ENCODE measurements at regions of chr5 and their contacts with region 1.

Region 1: GRCh38 chr5:172707285-172708182 is 63.5 kb downstream of the DUSP1 start:
- DNase-seq: peak; percentile 66 to 84
- ATAC-seq: peak; percentile 98 to 99
- H3K4me3 ChIP-seq: peak overlapping the region; percentile 33
- H3K27ac ChIP-seq: peak overlapping the region; percentile 80 to 83
- H3K4me1 ChIP-seq: peaks cover 11% of the 10 kb centered on the region
- CTCF ChIP-seq: peak; percentile 87
- EP300 ChIP-seq: no peak
- POLR2A ChIP-seq: no peak
- RAD21 ChIP-seq: peak; percentile 96 to 97

Region 2: DNA sequence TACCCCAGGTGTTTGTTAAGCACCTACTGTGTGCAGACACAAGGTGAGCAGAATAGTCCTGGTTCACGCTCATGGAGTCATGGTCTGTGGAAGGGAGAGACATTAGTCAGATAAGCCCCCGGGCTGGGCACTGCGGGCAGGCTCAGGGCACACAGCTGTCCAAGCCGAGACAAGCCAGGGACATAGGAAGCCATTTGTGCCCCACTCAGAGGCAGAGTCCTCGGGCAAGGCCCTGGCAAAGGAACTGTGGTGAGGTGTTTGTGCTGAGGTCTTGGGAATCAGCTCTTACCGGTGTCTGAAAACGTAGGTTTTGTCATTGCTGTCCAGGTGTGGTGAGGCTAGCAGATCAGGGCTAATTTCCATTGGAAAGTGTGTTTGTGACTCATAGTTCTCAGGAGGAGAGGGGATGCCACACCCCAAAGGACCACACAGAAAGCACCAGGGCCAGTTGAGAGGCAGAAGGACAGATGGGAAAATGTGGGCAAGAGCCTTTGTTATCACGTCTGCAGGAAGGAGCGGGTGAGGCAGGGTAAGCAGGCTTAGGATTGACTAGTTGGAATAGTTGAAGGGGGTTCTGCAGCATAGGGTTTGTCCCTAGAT is 112.6 kb before region 1 on chr5:
- CTCF ChIA-PET with region 1: no interaction called
- POLR2A ChIA-PET with region 1: no interaction called
- DNase-seq: no peak
- ATAC-seq: peak in 1 of 2 experiments; percentile 46; a peak in 2 of 6 replicates
- H3K4me3 ChIP-seq: no peak overlapping the region
- H3K27ac ChIP-seq: no peak overlapping the region
- H3K4me1 ChIP-seq: no peaks in the 10 kb centered on the region
- CTCF ChIP-seq: no peak
- EP300 ChIP-seq: no peak
- POLR2A ChIP-seq: no peak
- RAD21 ChIP-seq: no peak

Region 3: GRCh38 chr5:172697123-172698121 is 10.1 kb before region 1 on chr5:
- CTCF ChIA-PET with region 1: interaction called, 61 read pairs
- POLR2A ChIA-PET with region 1: interaction called, 3 read pairs
- DNase-seq: peak; percentile 80 to 84
- ATAC-seq: peak; percentile 83 to 90
- H3K4me3 ChIP-seq: peak overlapping the region; percentile 43
- H3K27ac ChIP-seq: peak overlapping the region; percentile 67 to 81
- H3K4me1 ChIP-seq: peaks cover 8% of the 10 kb centered on the region; the same call in 2 of the 3 replicates
- CTCF ChIP-seq: peak; percentile 92
- EP300 ChIP-seq: no peak
- POLR2A ChIP-seq: no peak
- RAD21 ChIP-seq: peak; percentile 98 to 99

Region 4: DNA sequence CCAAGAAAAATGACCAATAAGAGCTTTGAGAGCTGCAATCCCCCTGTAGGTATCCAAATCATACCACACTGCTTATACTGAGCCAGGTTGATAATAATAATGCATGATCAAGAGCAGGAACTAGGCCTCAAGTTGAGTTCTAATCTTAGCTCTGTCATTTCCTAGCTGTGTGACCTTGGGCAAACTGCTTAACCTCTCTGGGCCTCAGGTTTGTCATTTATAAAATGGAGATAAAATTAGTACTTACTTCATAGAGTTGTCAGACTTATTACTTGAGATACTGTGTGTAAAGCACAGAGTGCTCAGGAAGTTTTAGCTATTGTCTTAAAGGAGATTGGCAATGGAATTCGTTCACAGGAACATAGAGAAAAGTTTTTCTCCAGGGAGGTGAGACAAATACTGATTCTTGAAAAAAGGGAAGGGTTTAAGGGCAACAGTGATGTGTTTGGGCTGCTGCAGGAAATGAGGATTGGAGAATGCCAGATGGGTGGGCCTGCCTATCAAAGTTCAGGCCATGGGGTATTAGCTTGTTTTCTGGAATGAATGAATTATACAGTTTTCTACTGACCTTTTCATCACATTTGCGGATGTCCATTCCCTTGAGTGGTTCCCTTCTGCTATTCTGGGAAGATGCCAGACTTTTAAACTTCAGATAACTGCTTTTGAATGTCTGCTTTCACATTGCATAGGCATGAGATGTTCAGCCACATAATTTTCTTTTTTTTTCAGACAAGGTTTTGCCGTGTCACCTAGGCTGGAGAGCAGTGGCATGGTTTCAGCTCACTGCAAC is 265.8 kb after region 1 on chr5:
- CTCF ChIA-PET with region 1: interaction called, 10 read pairs
- POLR2A ChIA-PET with region 1: no interaction called
- DNase-seq: no peak
- ATAC-seq: no peak
- H3K4me3 ChIP-seq: no peak overlapping the region
- H3K27ac ChIP-seq: no peak overlapping the region
- H3K4me1 ChIP-seq: no peaks in the 10 kb centered on the region
- CTCF ChIP-seq: no peak
- EP300 ChIP-seq: no peak
- POLR2A ChIP-seq: no peak
- RAD21 ChIP-seq: no peak

Region 5: GRCh38 chr5:173178369-173178910 is 470.9 kb after region 1 on chr5:
- CTCF ChIA-PET with region 1: no interaction called
- POLR2A ChIA-PET with region 1: interaction called, 12 read pairs
- DNase-seq: no peak
- ATAC-seq: no peak
- H3K4me3 ChIP-seq: no peak overlapping the region
- H3K27ac ChIP-seq: no peak overlapping the region
- H3K4me1 ChIP-seq: no peaks in the 10 kb centered on the region
- CTCF ChIP-seq: no peak
- EP300 ChIP-seq: no peak
- POLR2A ChIP-seq: no peak
- RAD21 ChIP-seq: no peak

Region 6: DNA sequence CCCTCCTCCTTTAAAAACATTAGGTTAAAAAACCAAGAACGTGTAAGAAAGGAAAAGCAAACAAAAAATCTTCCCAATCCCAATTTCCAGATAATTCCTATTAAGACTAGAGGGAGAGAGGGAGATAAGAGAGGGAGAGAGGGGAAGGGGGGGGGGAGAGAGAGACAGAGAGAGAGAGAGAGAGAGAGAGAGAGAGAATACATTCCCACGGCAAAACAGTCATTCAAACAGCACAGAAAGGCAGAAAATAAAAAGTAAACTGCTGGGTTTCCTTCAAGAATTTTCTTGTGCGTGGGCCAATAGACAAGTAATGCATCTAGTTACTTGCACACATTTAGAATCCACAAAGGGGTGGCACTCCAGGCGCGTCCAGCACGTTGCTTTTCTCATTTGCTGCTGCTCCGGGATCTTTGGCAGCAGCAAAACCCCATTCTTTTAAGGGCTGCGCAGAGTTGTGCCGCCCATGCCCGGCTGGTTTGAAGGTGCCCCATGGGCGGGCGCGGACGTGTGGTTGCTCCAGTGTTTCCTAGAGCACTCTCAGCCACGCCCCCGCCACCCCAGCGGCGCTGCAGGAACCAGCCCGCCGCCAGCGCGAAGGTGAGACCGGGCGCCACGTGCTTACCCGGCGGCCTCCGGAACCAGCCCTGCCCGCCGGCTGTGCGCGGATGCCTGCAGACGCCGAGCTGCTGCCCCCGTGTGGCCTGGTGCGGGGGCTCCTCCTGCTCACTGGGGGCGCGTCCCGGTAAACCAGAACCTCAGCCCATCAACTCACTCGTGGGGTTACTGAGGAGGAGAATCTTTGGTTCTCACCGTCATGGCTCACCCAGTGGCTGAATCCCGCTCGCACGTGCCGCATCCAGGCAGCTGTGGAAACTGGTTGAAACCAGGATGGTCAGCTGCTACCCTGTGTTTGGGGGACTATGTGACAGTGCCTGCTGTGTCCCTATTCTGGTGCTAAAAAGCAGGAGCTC is 576.1 kb after region 1 on chr5:
- CTCF ChIA-PET with region 1: interaction called, 20 read pairs
- POLR2A ChIA-PET with region 1: no interaction called
- DNase-seq: peak; percentile 80 to 82
- ATAC-seq: peak; percentile 94 to 98
- H3K4me3 ChIP-seq: peak overlapping the region; percentile 34
- H3K27ac ChIP-seq: peak overlapping the region; percentile 69 to 79
- H3K4me1 ChIP-seq: peaks cover 4% of the 10 kb centered on the region; the same call in 1 of the 3 replicates
- CTCF ChIP-seq: peak; percentile 78
- EP300 ChIP-seq: no peak
- POLR2A ChIP-seq: no peak
- RAD21 ChIP-seq: peak; percentile 69 to 82

Region 7: DNA sequence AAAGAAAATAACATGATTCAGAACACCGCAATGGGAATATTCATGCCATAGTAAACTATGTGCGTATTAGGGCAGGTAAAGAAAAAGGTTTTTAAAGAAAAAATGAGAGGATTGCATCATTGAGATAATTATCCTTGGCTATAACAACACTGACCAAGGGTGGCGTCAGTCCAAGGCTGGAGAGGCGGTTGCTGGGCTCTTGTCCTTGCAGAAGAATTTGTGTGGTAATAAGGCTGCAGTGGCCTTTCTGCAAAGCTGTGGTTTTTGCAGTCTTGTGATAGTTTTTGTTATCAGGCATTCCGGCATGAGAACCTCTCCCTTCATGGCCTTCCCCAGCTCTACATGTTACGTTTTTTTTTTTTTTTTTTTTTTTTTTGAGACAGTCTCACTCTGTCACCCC is 894.9 kb after region 1 on chr5:
- CTCF ChIA-PET with region 1: no interaction called
- POLR2A ChIA-PET with region 1: no interaction called
- DNase-seq: no peak
- ATAC-seq: no peak
- H3K4me3 ChIP-seq: no peak overlapping the region
- H3K27ac ChIP-seq: no peak overlapping the region
- H3K4me1 ChIP-seq: no peaks in the 10 kb centered on the region
- CTCF ChIP-seq: no peak
- EP300 ChIP-seq: no peak
- POLR2A ChIP-seq: no peak
- RAD21 ChIP-seq: no peak

Measured in A549 (cell line).